Activated naive CD4-positive, alpha-beta T cell treated with anti-CD3 and anti-CD28 coated beads for 36 hours (primary cell): ENCODE measurements at regions of chr15 and their contacts with region 1.

Region 1: DNA sequence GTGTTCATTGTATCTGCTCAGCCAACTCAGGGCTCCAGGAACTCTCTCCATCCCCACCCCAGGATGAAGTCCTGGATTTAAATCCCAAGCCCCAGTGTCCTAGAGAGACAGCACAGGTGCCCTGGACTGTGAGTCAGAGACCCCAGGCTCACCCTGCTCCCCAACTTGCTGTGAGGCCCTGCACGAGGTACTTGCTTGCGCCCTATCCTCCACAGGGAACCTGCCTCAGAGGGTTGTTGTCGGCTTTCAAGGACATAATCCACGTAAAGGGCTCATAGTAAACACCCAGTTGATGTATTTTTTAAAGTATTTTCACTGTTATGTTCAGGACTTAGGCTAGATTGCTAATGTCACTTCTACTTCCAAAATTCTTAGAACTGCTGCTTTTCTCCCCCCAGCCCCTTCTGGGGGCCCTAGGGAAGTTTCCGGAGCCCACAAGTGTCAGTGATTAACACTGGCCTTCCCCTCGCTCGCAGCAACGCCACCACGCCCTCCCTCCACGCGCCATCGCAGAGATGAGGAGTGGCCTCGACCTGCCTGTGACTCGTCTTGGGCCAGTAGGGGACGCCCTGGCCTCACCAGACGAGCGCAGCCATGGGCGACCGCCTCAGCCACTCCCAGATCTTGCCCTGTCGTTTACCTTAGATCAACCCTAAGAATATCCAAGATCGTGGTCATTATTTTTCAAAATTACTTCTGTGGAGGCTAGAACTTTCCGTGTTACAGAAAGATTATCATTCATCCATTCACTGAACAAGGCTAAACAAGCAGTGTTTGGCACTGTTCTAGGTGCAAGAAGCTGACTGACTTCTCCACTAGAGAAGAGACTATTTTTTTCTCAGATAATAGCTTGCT is 6.0 kb upstream of the SRP14 start:
- DNase-seq: peak; percentile 96
- H3K4me3 Mint-ChIP-seq: peak overlapping the region; percentile 45
- H3K27ac Mint-ChIP-seq: peak overlapping the region; percentile 50
- H3K4me1 Mint-ChIP-seq: peaks cover 70% of the 10 kb centered on the region
- H3K27me3 Mint-ChIP-seq: no peaks in the 10 kb centered on the region

Region 2: GRCh38 chr15:38554354-38554753 is 1490.6 kb before region 1 on chr15:
- CTCF ChIA-PET with region 1: no interaction called
- intact Hi-C with region 1: loop called (anchors 10 kb)
- DNase-seq: peak; percentile 72
- H3K4me3 Mint-ChIP-seq: no peak overlapping the region
- H3K27ac Mint-ChIP-seq: peak overlapping the region; percentile 92
- H3K4me1 Mint-ChIP-seq: peaks cover 90% of the 10 kb centered on the region
- H3K27me3 Mint-ChIP-seq: no peaks in the 10 kb centered on the region

Region 3: GRCh38 chr15:39573844-39574243 is 471.1 kb before region 1 on chr15:
- CTCF ChIA-PET with region 1: no interaction called
- intact Hi-C with region 1: no loop called
- DNase-seq: no peak
- H3K4me3 Mint-ChIP-seq: no peak overlapping the region
- H3K27ac Mint-ChIP-seq: no peak overlapping the region
- H3K4me1 Mint-ChIP-seq: no peaks in the 10 kb centered on the region
- H3K27me3 Mint-ChIP-seq: peaks cover 19% of the 10 kb centered on the region

Region 4: DNA sequence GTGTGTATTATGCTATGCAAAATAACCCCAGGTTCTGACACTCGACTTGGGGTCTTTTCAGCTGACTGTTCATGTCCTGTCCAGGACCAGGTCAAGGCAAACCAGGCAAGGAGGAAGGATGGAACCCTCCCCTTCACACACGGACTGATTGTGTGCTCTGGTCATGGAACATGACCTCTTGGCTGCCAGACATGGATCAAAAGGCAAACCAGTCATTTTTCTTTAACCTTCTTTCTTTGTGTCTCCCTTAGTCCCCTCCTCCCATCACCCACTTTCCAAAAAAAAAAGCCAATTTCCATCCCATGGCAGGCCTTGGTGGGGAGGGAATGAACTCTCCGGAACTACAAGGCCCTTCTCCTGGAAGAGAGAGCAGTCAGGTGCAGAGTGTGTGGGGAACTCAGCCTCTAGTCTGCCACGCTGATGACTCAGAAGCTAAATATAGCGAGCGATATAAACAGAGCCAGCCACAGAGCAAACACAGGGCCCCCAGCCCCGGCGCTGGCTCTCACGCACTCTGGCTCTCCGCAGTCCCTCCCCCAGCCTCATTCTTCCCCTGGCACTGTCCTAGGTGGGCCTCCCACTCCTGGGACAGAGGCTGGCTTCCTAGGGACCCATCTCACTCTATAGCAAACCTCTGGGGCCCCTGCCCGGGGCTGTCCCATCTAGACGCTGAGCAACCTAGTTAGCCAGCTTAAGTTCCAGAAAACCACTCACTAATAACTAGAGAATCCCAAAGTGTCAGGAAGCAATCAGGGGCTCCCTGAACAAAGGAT is 53.7 kb after region 1 on chr15:
- CTCF ChIA-PET with region 1: interaction called, 181 read pairs
- intact Hi-C with region 1: loop called (anchors 1 kb)
- DNase-seq: peak; percentile 87
- H3K4me3 Mint-ChIP-seq: peak overlapping the region; percentile 54
- H3K27ac Mint-ChIP-seq: peak overlapping the region; percentile 96
- H3K4me1 Mint-ChIP-seq: peaks cover 70% of the 10 kb centered on the region
- H3K27me3 Mint-ChIP-seq: no peaks in the 10 kb centered on the region

Region 5: DNA sequence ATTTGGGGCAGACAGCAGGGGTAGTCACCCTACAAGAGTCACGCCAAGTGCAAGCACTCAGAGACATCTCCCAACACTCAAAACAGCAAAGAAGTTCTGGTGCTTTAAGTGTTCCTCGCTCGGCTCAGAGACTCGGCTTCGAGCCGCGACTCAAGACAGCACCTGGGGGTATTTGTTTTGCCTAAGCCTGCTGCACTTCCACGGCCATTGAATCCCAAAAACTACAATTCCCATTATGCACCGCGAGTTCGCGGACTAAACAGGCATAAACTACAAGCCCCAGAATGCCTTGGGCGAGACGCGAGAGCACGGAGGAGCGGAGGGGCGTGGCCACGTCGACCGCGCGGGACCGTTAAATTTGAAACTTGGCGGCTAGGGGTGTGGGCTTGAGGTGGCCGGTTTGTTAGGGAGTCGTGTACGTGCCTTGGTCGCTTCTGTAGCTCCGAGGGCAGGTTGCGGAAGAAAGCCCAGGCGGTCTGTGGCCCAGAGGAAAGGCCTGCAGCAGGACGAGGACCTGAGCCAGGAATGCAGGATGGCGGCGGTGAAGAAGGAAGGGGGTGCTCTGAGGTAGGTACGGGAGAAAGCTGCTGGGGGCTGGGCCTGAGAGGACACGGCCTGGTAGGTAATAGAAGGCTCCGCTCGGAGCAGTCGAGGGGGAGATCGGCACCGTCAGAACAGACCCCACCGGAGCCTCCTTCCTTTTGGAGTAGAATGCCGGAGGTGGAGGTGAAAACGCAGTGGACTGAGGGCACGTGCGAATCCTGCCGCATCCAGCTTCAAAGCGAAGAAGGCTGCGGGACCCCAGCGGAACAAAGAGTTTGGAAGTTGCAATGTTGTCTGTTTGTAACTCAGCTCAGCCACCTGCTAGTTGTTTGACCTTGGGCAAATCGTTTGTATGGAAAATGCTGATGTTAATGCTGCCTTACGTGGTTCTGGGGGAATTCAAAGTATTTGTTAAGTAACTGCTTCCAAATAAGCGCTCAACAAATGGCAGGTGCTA is 116.0 kb after region 1 on chr15 and contains the start of gene BUB1B:
- CTCF ChIA-PET with region 1: interaction called, 23 read pairs
- intact Hi-C with region 1: loop called (anchors 1 kb)
- DNase-seq: peak; percentile 96
- H3K4me3 Mint-ChIP-seq: no peak within 1 kb of the TSS
- H3K27ac Mint-ChIP-seq: no peak within 1 kb of the TSS
- H3K4me1 Mint-ChIP-seq: peaks cover 6% of the 10 kb centered on the region
- H3K27me3 Mint-ChIP-seq: no peaks in the 10 kb centered on the region
- total RNA-seq, gene BUB1B: 102 to 106 TPM

Region 6: DNA sequence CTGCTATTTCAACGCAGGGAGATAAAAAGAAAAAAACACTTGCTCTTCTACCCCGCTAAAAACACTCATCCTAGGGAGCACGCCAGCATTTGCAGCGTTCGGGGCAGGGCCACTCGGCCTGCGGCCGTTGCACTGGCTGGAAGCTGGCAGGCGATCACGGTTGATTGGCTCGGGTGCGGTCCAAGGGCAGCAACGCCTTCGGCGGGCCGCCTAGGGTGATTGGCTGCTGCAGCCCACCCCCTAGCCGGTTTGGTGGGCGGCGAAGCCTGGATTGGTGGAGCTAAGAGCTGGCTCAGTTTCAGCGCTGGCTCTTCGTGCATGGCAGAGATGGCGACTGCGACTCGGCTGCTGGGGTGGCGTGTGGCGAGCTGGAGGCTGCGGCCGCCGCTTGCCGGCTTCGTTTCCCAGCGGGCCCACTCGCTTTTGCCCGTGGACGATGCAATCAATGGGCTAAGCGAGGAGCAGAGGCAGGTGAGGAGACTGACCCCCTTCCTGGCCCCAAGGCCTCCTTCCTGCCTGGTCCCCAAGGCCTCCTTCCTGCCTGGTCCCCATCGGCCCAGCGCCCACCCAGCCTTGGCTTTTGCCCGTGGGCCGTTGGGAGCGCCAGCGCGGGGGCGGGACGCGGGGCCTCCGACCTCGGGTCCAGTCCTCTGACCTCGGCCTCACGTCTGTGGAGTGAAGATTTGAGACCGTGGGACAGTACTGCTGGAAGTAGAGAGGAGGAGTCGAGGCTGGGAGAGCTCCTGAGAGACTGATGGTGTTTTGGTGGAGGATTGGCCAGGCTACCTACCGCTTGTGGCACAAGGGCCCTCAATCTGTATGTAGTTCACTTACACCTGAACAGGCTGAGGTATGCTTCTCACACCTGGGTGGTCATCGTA is 360.8 kb after region 1 on chr15 and contains the start of gene IVD:
- CTCF ChIA-PET with region 1: no interaction called
- intact Hi-C with region 1: loop called (anchors 10 kb)
- DNase-seq: peak; percentile 94
- H3K4me3 Mint-ChIP-seq: peak within 1 kb of the TSS; percentile 83
- H3K27ac Mint-ChIP-seq: peak within 1 kb of the TSS; percentile 71
- H3K4me1 Mint-ChIP-seq: peaks cover 56% of the 10 kb centered on the region
- H3K27me3 Mint-ChIP-seq: no peaks in the 10 kb centered on the region
- total RNA-seq, gene IVD: 33.1 to 34.1 TPM

Region 7: DNA sequence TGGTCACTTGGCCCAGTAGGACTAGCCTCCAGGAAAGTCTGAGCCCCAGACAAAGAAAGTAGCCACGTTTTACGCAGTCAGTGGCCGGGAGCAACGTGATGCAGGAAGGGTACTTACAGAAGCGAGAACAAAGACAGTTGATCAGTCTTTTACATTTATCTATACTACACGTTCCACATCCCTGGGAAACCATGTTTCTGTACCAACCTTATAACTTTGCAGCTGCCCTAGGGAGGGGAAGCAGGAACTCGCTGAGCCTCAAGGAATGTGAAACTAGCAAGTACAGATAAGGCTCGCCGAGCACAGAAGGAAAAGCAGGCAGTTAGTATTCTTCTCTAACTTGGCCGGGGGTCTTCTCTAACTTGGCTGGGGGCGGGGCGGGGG is 545.7 kb after region 1 on chr15:
- CTCF ChIA-PET with region 1: no interaction called
- intact Hi-C with region 1: no loop called
- DNase-seq: no peak
- H3K4me3 Mint-ChIP-seq: peak overlapping the region; percentile 76
- H3K27ac Mint-ChIP-seq: no peak overlapping the region
- H3K4me1 Mint-ChIP-seq: peaks cover 23% of the 10 kb centered on the region
- H3K27me3 Mint-ChIP-seq: peaks cover 5% of the 10 kb centered on the region